IMR-90 (cell line): ENCODE measurements at regions of chr4 and their contacts with region 1.

Region 1: DNA sequence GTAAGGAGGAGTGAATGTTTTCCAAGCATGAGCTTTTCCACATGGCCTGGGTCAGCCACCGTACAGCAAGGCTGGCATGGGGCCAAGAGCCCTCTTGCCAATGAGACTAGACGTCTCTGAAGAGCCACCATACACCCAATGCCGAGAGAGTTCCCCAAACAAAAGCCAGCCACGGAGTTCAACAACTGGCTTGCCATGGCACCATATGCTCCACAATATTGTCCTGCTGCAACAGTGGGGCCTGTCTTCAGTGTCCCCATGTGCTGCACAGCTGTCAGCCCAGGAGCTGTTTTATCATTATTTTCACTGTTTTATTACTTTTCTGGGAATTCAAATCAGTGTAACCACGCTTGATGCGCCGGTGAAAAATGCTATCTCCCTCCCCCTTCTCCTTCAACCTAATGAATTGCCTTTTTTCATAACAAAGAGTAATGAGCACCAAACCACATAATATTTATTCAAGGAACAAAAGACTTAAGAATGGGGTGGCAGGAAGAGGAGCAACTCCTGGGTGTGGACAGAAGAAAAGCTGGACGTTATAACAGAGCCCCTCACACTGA is 18.4 kb downstream of the MAML3 start:
- DNase-seq: no peak
- ATAC-seq: no peak
- H3K4me3 ChIP-seq: no peak overlapping the region
- H3K27ac ChIP-seq: peak overlapping the region; percentile 51
- H3K4me1 ChIP-seq: peaks cover 21% of the 10 kb centered on the region
- H3K27me3 ChIP-seq: no peaks in the 10 kb centered on the region
- CTCF ChIP-seq: no peak
- POLR2A ChIP-seq: no peak
- RAD21 ChIP-seq: no peak

Region 2: GRCh38 chr4:140080883-140081282 is 54.7 kb before region 1 on chr4:
- CTCF ChIA-PET with region 1: no interaction called
- POLR2A ChIA-PET with region 1: no interaction called
- dilution Hi-C with region 1: no loop called
- in situ Hi-C with region 1: no loop called
- intact Hi-C with region 1: loop called (anchors 5 kb)
- DNase-seq: peak; percentile 51
- ATAC-seq: 0 out of 2 replicates have a peak, but pooled peaks have one; percentile 10
- H3K4me3 ChIP-seq: no peak overlapping the region
- H3K27ac ChIP-seq: no peak overlapping the region
- H3K4me1 ChIP-seq: peaks cover 36% of the 10 kb centered on the region
- H3K27me3 ChIP-seq: no peaks in the 10 kb centered on the region
- CTCF ChIP-seq: no peak
- POLR2A ChIP-seq: no peak
- RAD21 ChIP-seq: no peak

Region 3: DNA sequence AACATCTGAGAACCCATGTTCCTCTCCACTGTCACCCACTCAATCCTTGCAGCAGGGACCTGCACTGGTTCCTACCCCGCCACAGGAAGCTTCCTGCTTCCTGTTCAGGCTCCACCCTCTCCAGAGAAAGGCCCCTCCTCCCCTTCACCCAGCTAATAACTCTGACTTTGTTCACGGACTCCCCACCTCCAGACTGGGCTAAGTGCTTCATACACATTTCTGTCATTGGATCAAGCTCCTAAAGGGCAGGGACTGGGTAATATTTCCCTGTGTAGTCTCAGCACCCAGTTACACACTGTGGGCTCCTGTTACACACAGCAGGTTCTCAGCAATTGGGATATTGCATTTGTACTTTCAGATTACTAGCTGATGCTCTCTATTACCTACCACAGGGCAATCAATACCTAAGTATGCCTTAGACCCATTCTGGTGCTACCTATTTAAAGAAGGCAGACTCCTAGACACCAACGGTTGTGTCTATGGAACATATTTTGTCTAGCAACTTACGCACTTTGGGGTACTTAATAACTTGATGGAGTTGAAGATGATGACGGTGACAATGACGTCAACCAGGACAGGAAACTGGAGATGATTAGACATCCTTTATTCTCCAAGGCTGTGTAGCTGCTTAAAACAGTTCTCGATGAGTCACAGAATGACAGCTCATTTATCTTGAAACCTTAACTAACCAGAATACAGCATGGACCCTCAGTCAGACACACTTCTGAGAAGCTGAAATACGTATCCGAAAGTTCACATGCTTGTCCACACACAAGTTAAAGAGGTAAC is 39.7 kb before region 1 on chr4:
- CTCF ChIA-PET with region 1: no interaction called
- POLR2A ChIA-PET with region 1: no interaction called
- dilution Hi-C with region 1: no loop called
- in situ Hi-C with region 1: no loop called
- intact Hi-C with region 1: loop called (anchors 5 kb)
- DNase-seq: peak; percentile 100
- ATAC-seq: peak; percentile 24
- H3K4me3 ChIP-seq: no peak overlapping the region; the same call in 1 of the 2 replicates
- H3K27ac ChIP-seq: peak overlapping the region; percentile 76
- H3K4me1 ChIP-seq: peaks cover 50% of the 10 kb centered on the region
- H3K27me3 ChIP-seq: no peaks in the 10 kb centered on the region
- CTCF ChIP-seq: no peak
- POLR2A ChIP-seq: peak; percentile 78
- RAD21 ChIP-seq: peak; percentile 25